Activated CD4-positive, alpha-beta T cell treated with anti-CD3 and anti-CD28 coated beads for 36 hours (primary cell): ENCODE measurements at regions of chr1 and their contacts with region 1.

Region 1: GRCh38 chr1:22976461-22977243 is 4.0 kb upstream of the LACTBL1 start:
- DNase-seq: peak; percentile 74
- ATAC-seq: peak; percentile 95
- H3K4me3 Mint-ChIP-seq: no peak overlapping the region
- H3K27ac Mint-ChIP-seq: no peak overlapping the region
- H3K4me1 Mint-ChIP-seq: no peaks in the 10 kb centered on the region
- H3K27me3 Mint-ChIP-seq: peaks cover 13% of the 10 kb centered on the region

Region 2: DNA sequence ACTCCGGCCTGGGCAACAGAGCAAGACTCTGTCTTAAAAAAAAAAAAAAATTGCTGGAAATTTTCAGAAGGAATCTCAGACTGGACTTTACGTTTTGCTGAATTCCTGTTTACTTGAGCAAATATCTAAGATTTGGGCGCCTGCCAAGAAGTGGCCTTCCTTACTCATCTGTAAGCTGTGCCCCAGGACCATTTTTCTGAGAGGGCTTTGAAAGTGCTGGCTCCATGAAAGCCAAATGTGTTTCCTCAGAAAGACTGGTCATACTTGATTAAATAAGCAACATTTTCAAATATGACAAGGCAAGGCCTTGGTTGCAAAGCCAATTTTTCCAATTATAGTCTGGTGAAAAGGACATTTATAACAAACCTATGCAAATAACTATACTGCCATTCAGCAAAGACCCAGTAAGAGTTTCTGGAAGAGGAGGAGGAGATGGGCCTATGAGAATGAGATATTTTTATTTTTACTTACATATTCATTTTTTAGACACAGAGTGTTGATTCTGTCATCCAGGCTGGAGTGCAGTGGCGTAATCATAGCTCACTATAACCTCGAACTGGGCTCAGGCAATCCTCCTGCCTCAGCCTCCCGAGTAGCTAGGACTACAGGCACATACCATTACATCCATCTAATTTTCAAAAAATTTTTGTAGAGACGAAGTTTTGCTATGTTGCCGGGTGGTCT is 296.9 kb after region 1 on chr1:
- CTCF ChIA-PET with region 1: no interaction called
- POLR2A ChIA-PET with region 1: no interaction called
- intact Hi-C with region 1: loop called in 1 of 2 experiments (anchors 1 kb)
- DNase-seq: no peak
- ATAC-seq: no peak
- H3K4me3 Mint-ChIP-seq: no peak overlapping the region
- H3K27ac Mint-ChIP-seq: no peak overlapping the region
- H3K4me1 Mint-ChIP-seq: no peaks in the 10 kb centered on the region
- H3K27me3 Mint-ChIP-seq: peaks cover 26% of the 10 kb centered on the region